ENCODE measurements at regions of chr2 and their contacts with region 1.

Region 1: DNA sequence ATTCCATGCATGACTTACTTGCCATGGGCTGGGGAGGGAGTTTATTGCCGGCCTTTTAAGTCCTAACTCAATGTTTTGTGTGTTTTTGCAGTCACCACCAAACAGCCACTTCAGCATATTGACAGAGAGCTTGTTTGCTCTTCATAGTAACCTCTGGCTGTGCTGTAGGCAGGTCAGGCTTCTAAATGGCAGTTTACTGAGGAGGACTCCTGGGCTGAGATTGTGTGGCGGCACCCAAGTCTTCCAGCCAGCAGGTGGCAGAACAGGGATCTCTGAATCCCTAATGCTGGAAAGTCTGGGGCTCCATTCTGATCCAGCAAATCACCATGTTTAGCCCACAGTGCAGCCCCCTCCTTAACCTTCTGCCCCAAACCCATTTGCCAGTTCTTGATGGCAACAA is 121.2 kb downstream of the CAPN13 start:
- DNase-seq: no peak
- ATAC-seq: no peak
- H3K4me3 ChIP-seq: no peak overlapping the region
- H3K27ac ChIP-seq: peak overlapping the region in 1 of 10 donors; percentile 35
- H3K4me1 ChIP-seq: peaks cover 0 to 32% (median 14%) of the 10 kb centered on the region in 9 donors
- H3K27me3 ChIP-seq: no peaks in the 10 kb centered on the region
- CTCF ChIP-seq: peak in 6 of 9 donors; percentile 22 to 51 (median 30)

Region 2: GRCh38 chr2:30527859-30528258 is 158.1 kb before region 1 on chr2:
- intact Hi-C with region 1: loop called in 1 of 10 experiments (anchors 10 kb)
- DNase-seq: no peak
- ATAC-seq: no peak
- H3K4me3 ChIP-seq: no peak overlapping the region
- H3K27ac ChIP-seq: no peak overlapping the region
- H3K4me1 ChIP-seq: peaks cover 0 to 32% (median 9%) of the 10 kb centered on the region in 9 donors
- H3K27me3 ChIP-seq: no peaks in the 10 kb centered on the region
- CTCF ChIP-seq: no peak

Region 3: GRCh38 chr2:30622452-30622851 is 63.5 kb before region 1 on chr2:
- intact Hi-C with region 1: loop called in 2 of 10 experiments (anchors 5 kb)
- DNase-seq: no peak
- ATAC-seq: peak in 5 of 8 donors; percentile 39 to 69 (median 51)
- H3K4me3 ChIP-seq: no peak overlapping the region
- H3K27ac ChIP-seq: no peak overlapping the region
- H3K4me1 ChIP-seq: peaks cover 0 to 23% (median 8%) of the 10 kb centered on the region in 9 donors
- H3K27me3 ChIP-seq: no peaks in the 10 kb centered on the region
- CTCF ChIP-seq: no peak

Region 4: DNA sequence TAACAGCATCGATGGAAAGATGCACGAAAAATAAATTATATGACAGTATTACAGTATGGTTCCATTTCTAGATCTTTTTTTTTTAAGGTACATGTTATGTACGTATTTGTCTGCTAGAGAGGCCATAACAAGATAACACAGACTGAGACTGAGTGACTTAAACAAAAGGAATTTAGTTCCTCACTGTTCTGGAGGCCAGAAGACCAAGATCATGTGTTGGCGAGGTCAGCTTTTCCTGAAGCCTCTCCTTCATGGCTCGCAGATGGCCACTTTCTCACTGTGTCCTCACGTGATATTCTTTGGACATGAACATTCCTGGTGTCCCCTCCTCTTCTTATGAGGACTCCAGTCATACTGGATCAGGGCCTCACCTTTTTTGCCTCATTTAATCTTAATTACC is 56.1 kb before region 1 on chr2:
- intact Hi-C with region 1: loop called in 1 of 10 experiments (anchors 5 kb)
- DNase-seq: no peak
- ATAC-seq: no peak
- H3K4me3 ChIP-seq: no peak overlapping the region
- H3K27ac ChIP-seq: no peak overlapping the region
- H3K4me1 ChIP-seq: peaks cover 0 to 36% (median 19%) of the 10 kb centered on the region in 9 donors
- H3K27me3 ChIP-seq: no peaks in the 10 kb centered on the region
- CTCF ChIP-seq: no peak